AG04449 (cell line): ENCODE measurements at regions of chr12 and their contacts with region 1.

Region 1: GRCh38 chr12:105357162-105357691 is 26.7 kb downstream of the C12orf75 start:
- DNase-seq: no peak
- H3K4me3 ChIP-seq: no peak overlapping the region
- CTCF ChIP-seq: no peak

Region 2: GRCh38 chr12:105322070-105322469 is 35.2 kb before region 1 on chr12:
- CTCF ChIA-PET with region 1: no interaction called
- POLR2A ChIA-PET with region 1: no interaction called
- DNase-seq: no peak
- H3K4me3 ChIP-seq: no peak overlapping the region
- CTCF ChIP-seq: no peak

Region 3: GRCh38 chr12:105369014-105369413 is 11.8 kb after region 1 on chr12:
- CTCF ChIA-PET with region 1: interaction called, 13 read pairs
- POLR2A ChIA-PET with region 1: interaction called, 3 read pairs
- DNase-seq: peak; percentile 53
- H3K4me3 ChIP-seq: no peak overlapping the region
- CTCF ChIP-seq: peak; percentile 28

Region 4: GRCh38 chr12:105393587-105393986 is 36.4 kb after region 1 on chr12:
- CTCF ChIA-PET with region 1: no interaction called
- POLR2A ChIA-PET with region 1: no interaction called
- DNase-seq: no peak
- H3K4me3 ChIP-seq: no peak overlapping the region
- CTCF ChIP-seq: no peak

Region 5: DNA sequence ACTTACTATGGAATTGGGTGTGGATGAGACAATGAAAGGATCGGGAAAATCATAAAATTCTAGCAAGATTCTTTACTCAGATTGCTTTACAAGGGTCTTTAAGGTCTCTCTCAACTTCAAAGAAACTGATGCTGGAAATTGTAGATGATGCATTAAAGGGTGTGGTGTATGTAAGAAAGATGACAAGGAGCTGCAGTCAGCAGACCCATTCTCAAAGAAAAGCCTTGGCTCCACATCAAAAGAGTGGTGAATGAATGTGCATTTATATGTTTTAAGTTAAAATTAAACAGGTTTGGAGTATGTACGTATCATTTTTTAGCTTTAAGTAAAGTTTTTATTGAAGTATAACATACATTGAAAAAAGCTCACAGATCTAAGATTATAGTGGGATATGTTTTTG is 167.7 kb after region 1 on chr12:
- CTCF ChIA-PET with region 1: no interaction called
- POLR2A ChIA-PET with region 1: no interaction called
- DNase-seq: no peak
- H3K4me3 ChIP-seq: no peak overlapping the region
- CTCF ChIP-seq: no peak